ENCODE measurements at regions of chr14 and their contacts with region 1.

Region 1: GRCh38 chr14:99683619-99684355 is at the start of gene CYP46A1:
- DNase-seq: peak; percentile 97
- H3K4me3 ChIP-seq: peak within 1 kb of the TSS; percentile 65 to 86 (median 67)
- H3K27ac ChIP-seq: peak within 1 kb of the TSS; percentile 57
- H3K4me1 ChIP-seq: peaks cover 19% of the 10 kb centered on the region
- H3K27me3 ChIP-seq: peaks cover 3% of the 10 kb centered on the region
- CTCF ChIP-seq: no peak
- total RNA-seq, gene CYP46A1: not detected

Region 2: GRCh38 chr14:99460793-99461192 is 223.0 kb before region 1 on chr14:
- CTCF ChIA-PET with region 1: interaction called, 12 read pairs
- dilution Hi-C with region 1: no loop called
- in situ Hi-C with region 1: no loop called
- intact Hi-C with region 1: no loop called
- DNase-seq: peak; percentile 95
- H3K4me3 ChIP-seq: no peak overlapping the region
- H3K27ac ChIP-seq: peak overlapping the region; percentile 25
- H3K4me1 ChIP-seq: peaks cover 27% of the 10 kb centered on the region
- H3K27me3 ChIP-seq: no peaks in the 10 kb centered on the region
- CTCF ChIP-seq: no peak

Region 3: DNA sequence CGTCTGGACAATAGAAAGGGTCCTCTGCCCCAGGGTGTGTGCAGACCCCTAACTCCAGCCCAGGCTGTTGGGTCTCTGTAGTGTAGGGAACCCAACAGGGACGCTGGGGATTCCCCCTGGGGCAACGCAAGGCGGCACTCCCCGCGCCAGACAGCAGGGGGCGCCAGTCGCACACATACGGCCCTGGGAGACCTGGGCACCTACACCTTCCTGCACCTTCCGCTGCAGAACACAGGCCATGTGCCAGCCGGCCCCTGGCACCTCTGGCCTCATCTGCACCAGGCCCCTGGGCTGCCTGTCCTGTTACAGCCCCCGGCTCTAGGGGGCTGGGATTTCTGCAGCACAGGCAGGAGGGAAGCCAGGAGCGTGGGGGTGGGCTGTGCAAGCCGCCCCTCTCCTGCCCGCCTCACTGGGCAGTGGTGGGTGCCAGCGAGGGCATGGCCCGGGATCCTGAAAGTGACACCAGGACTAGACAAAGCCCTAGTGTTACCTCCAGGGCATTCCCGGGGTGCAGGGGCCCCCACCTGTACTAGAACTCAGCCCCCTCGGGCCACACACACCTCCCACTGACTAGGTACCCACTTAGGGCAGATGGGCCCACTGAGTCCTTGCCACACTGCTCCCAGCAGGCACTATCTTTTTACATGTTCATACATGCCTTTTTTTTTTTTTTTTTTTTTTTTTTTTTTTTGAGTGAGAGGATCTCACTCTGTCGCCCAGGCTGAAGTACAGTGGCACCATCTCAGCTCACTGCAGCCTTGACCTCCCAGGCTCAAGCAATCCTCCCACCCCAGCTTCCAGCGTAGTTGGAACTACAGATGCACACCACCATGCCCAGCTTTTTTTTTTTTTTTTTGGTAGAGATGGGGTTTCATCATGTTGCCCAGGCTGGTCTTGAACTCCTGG is 165.1 kb before region 1 on chr14:
- CTCF ChIA-PET with region 1: no interaction called
- dilution Hi-C with region 1: no loop called
- in situ Hi-C with region 1: no loop called
- intact Hi-C with region 1: loop called (anchors 1 kb)
- DNase-seq: peak; percentile 58
- H3K4me3 ChIP-seq: no peak overlapping the region
- H3K27ac ChIP-seq: no peak overlapping the region
- H3K4me1 ChIP-seq: peaks cover 4% of the 10 kb centered on the region
- H3K27me3 ChIP-seq: no peaks in the 10 kb centered on the region
- CTCF ChIP-seq: peak; percentile 95 to 96

Region 4: GRCh38 chr14:99541677-99542470 is 141.9 kb before region 1 on chr14:
- CTCF ChIA-PET with region 1: no interaction called
- dilution Hi-C with region 1: loop called (anchors 10 kb)
- in situ Hi-C with region 1: no loop called
- intact Hi-C with region 1: no loop called
- DNase-seq: no peak
- H3K4me3 ChIP-seq: no peak overlapping the region
- H3K27ac ChIP-seq: no peak overlapping the region
- H3K4me1 ChIP-seq: peaks cover 26% of the 10 kb centered on the region
- H3K27me3 ChIP-seq: no peaks in the 10 kb centered on the region
- CTCF ChIP-seq: no peak

Region 5: DNA sequence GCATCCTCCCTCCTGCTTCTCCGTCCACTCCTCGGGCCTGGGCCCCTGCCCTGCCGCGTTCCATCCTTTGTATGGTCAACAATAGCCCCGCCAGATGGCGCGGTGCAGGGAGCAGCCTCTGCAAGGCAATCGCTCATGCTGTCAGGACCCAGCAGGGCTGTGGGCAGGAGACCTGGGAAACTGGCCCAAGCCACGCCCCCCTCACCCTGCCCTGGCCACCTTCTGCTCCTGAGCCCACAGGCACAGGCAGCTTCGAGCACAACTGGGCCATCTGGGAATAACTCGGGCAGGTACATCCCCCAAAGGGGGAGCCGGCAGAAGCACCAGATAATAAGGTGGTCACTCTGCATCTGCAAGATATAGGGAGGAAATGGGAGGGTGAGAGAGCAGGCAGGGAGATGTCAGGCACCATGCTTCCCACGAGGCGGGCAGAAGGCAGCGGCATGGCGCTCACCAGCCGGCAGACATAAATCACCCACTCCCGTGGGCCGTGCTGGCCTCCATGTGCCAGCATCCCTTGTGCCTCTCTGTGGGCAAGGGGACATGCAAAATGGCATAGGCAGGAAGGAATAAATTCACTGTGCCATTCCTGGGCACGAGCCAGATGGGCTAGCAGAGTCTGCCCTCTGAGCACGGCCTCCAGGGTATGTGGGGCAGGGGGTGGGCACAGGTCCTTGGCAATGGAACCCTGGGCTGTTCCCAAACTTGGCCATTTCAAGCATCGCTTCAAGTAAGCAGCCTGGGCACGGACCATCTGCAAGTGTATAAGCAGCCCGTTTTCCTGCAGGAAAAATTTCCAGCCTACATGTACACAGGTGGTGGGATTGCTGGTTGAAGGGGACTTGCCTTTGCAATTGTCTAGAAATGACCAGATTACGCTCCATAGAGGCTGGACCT is 120.3 kb before region 1 on chr14:
- CTCF ChIA-PET with region 1: no interaction called
- dilution Hi-C with region 1: no loop called
- in situ Hi-C with region 1: no loop called
- intact Hi-C with region 1: loop called (anchors 1 kb)
- DNase-seq: peak; percentile 47
- H3K4me3 ChIP-seq: no peak overlapping the region
- H3K27ac ChIP-seq: no peak overlapping the region
- H3K4me1 ChIP-seq: peaks cover 34% of the 10 kb centered on the region
- H3K27me3 ChIP-seq: no peaks in the 10 kb centered on the region
- CTCF ChIP-seq: no peak

Region 6: GRCh38 chr14:99619835-99620834 is 63.7 kb before region 1 on chr14:
- CTCF ChIA-PET with region 1: no interaction called
- dilution Hi-C with region 1: no loop called
- in situ Hi-C with region 1: no loop called
- intact Hi-C with region 1: no loop called
- DNase-seq: no peak
- H3K4me3 ChIP-seq: no peak overlapping the region
- H3K27ac ChIP-seq: no peak overlapping the region
- H3K4me1 ChIP-seq: peaks cover 31% of the 10 kb centered on the region
- H3K27me3 ChIP-seq: no peaks in the 10 kb centered on the region
- CTCF ChIP-seq: no peak

Region 7: DNA sequence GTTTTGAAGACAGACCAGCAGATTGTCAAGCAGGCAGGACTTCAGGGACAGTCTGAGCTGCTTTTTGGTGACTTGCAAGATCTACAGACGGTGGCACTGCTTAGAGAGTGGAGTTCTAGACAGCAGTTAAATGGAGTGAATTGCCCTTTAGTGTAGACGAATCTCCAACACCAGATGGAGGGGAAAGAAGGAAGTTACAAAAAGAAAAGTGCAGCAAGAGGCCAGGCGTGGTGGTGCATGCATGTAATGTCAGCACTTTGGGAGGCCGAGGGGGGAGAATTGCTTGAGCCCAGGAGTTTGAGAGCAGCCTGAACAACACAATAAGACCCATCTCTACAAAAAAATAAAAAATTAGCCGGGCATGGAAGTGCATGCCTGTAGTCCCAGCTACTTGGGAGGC is 47.3 kb before region 1 on chr14:
- CTCF ChIA-PET with region 1: no interaction called
- dilution Hi-C with region 1: no loop called
- in situ Hi-C with region 1: no loop called
- intact Hi-C with region 1: no loop called
- DNase-seq: no peak
- H3K4me3 ChIP-seq: no peak overlapping the region
- H3K27ac ChIP-seq: no peak overlapping the region
- H3K4me1 ChIP-seq: no peaks in the 10 kb centered on the region
- H3K27me3 ChIP-seq: no peaks in the 10 kb centered on the region
- CTCF ChIP-seq: no peak

Region 8: DNA sequence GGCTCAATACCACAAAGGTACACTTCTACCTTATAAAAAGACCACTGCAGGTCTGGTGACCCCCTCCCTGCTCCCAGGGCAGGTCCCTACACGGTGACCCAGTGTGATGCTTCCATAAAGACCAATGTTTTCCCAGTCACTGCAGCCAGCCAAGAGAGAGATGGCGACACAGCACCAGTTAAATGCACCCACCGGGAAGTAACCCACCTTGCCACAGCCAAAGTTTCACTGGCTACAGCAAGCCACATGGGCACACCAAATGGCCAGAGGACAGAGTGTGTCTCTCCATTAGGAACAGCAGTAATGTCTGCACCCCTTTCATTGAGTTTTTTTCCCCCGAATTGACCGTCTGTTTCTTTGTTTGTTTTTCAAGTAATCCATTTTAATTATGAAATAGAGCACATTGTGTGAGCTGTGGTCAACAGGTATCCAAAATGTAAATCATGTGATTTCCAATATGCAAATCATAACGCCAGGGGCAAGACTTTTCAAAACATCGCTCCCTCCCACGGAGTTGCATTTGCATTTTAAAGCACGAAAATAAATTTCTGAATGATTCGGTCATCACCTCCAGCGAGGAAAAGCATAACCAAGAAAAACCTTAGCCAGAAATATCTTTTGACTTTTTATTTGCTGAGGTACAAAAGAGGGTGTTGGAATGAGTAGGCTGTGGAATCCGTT is 60.6 kb after region 1 on chr14:
- CTCF ChIA-PET with region 1: no interaction called
- dilution Hi-C with region 1: no loop called
- in situ Hi-C with region 1: no loop called
- intact Hi-C with region 1: no loop called
- DNase-seq: peak; percentile 20
- H3K4me3 ChIP-seq: no peak overlapping the region
- H3K27ac ChIP-seq: no peak overlapping the region
- H3K4me1 ChIP-seq: no peaks in the 10 kb centered on the region
- H3K27me3 ChIP-seq: peaks cover 4% of the 10 kb centered on the region
- CTCF ChIP-seq: peak in 1 of 2 donors; percentile 14

Region 9: DNA sequence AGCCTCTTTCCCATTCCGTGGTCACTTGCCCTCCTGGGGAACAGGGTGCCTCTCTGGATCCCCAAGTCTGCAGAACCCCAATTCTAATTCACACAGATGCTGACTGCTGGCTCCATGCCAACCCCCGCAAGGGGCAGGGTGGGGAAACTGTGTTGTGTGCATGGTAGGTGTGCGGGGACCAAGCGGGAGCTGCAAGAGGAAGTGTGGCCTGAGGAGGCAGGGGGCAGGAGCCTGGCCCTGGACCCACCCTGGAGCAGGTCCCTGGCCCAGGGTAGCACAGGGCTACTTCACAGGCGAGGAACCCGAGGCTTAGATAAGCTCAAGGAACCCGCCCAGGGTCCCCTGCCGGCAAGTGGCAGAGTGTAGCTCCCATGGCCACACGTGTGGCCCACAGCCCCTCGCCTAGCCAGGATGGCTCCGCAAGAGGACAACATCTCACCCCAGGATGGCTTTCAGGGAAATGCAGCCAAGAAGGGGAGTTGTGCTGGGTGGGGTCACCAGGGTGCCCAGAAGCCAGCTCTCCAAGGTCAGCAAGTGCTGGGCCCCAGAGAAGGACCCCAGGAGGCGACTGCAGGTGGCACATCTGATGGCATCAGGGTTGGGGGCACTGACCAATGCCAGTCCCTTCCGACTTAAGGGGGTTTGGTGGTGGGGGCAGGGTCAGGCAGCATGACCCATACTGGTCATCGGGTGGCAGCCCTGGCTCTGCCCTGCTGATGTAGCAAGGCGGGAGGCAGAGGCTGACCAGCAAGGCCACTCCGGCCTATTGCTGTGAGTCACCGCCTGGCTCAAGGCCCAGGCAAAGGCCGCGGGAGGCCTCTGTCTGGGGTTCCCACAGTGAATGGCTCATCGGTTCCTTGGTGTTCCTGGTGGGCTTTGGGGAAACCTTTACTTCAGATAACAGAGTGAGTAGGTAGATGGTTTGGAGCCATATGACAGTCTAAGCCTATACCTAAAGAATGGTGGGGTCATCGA is 72.1 kb after region 1 on chr14:
- CTCF ChIA-PET with region 1: no interaction called
- dilution Hi-C with region 1: loop called (anchors 10 kb)
- in situ Hi-C with region 1: no loop called
- intact Hi-C with region 1: no loop called
- DNase-seq: peak; percentile 56
- H3K4me3 ChIP-seq: no peak overlapping the region
- H3K27ac ChIP-seq: no peak overlapping the region
- H3K4me1 ChIP-seq: peaks cover 24% of the 10 kb centered on the region
- H3K27me3 ChIP-seq: no peaks in the 10 kb centered on the region
- CTCF ChIP-seq: no peak

Region 10: DNA sequence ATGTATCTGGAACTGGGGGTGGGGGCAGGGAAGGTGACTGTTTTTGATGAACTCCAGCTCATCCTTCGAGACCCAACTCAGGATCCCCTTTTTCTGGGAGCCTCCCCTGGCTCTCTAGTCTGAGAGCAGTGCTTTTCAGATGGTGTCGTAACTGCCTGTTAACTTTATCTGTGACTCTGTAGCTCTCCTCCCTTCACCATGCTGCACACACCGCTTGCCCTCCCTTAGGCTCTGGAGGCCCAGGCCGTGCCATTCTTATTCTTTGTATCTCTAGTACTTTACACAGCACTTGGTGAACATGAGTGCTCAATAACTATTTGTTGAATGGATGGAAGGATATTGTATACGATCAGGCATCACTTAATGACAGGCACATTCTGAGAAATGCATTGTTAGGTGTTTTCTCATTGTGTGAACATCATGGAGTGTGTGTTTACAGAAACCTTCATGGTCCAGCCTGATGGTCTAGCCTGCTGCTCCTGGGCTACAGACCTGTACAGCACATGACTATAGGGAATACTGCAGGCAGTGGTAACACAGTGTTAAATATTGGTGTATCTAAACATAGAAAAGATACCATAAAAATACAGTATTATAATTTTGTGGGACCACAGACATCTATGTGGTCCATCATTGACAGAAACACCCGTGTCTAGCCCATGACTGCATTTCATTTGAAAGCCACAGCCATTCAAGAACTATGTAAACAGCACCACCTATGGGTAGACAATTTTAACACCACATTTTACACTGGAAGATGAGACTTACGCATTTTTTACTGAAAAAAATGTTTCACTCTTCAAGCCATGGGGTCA is 201.3 kb after region 1 on chr14:
- CTCF ChIA-PET with region 1: no interaction called
- dilution Hi-C with region 1: no loop called
- in situ Hi-C with region 1: loop called in 1 of 2 experiments (anchors 25 kb)
- intact Hi-C with region 1: loop called (anchors 1 kb)
- DNase-seq: peak; percentile 23
- H3K4me3 ChIP-seq: no peak overlapping the region
- H3K27ac ChIP-seq: no peak overlapping the region
- H3K4me1 ChIP-seq: no peaks in the 10 kb centered on the region
- H3K27me3 ChIP-seq: peaks cover 4% of the 10 kb centered on the region
- CTCF ChIP-seq: peak; percentile 53 to 75